ENCODE measurements at regions of chr13 and their contacts with region 1.

Region 1: GRCh38 chr13:30673669-30674521 is 56.2 kb downstream of the USPL1 start:
- DNase-seq: peak; percentile 94
- ATAC-seq: peak; percentile 93
- H3K4me3 Mint-ChIP-seq: peak overlapping the region; percentile 92
- H3K27ac Mint-ChIP-seq: peak overlapping the region; percentile 92
- H3K4me1 Mint-ChIP-seq: peaks cover 29% of the 10 kb centered on the region
- H3K27me3 Mint-ChIP-seq: no peaks in the 10 kb centered on the region
- CTCF ChIP-seq: no peak

Region 2: GRCh38 chr13:30306762-30307193 is 367.1 kb before region 1 on chr13:
- CTCF ChIA-PET with region 1: no interaction called
- POLR2A ChIA-PET with region 1: no interaction called
- intact Hi-C with region 1: loop called (anchors 2 kb)
- DNase-seq: peak; percentile 86
- ATAC-seq: peak; percentile 86
- H3K4me3 Mint-ChIP-seq: peak overlapping the region; percentile 90
- H3K27ac Mint-ChIP-seq: peak overlapping the region; percentile 85
- H3K4me1 Mint-ChIP-seq: peaks cover 72% of the 10 kb centered on the region
- H3K27me3 Mint-ChIP-seq: no peaks in the 10 kb centered on the region
- CTCF ChIP-seq: no peak

Region 3: GRCh38 chr13:30572859-30573275 is 101.0 kb before region 1 on chr13:
- CTCF ChIA-PET with region 1: no interaction called
- POLR2A ChIA-PET with region 1: no interaction called
- intact Hi-C with region 1: loop called (anchors 2 kb)
- DNase-seq: no peak
- ATAC-seq: peak; percentile 83
- H3K4me3 Mint-ChIP-seq: peak overlapping the region; percentile 64
- H3K27ac Mint-ChIP-seq: peak overlapping the region; percentile 71
- H3K4me1 Mint-ChIP-seq: peaks cover 23% of the 10 kb centered on the region
- H3K27me3 Mint-ChIP-seq: no peaks in the 10 kb centered on the region
- CTCF ChIP-seq: no peak

Region 4: GRCh38 chr13:30659980-30660379 is 13.9 kb before region 1 on chr13:
- CTCF ChIA-PET with region 1: no interaction called
- POLR2A ChIA-PET with region 1: interaction called, 8 read pairs
- intact Hi-C with region 1: loop called (anchors 1 kb)
- DNase-seq: no peak
- ATAC-seq: no peak
- H3K4me3 Mint-ChIP-seq: peak overlapping the region; percentile 53
- H3K27ac Mint-ChIP-seq: peak overlapping the region; percentile 84
- H3K4me1 Mint-ChIP-seq: peaks cover 5% of the 10 kb centered on the region
- H3K27me3 Mint-ChIP-seq: no peaks in the 10 kb centered on the region
- CTCF ChIP-seq: no peak

Region 5: GRCh38 chr13:30690282-30691188 is 16.6 kb after region 1 on chr13:
- CTCF ChIA-PET with region 1: no interaction called
- POLR2A ChIA-PET with region 1: no interaction called
- intact Hi-C with region 1: loop called (anchors 2 kb)
- DNase-seq: peak; percentile 27
- ATAC-seq: peak; percentile 83
- H3K4me3 Mint-ChIP-seq: peak overlapping the region; percentile 76
- H3K27ac Mint-ChIP-seq: peak overlapping the region; percentile 71
- H3K4me1 Mint-ChIP-seq: peaks cover 18% of the 10 kb centered on the region
- H3K27me3 Mint-ChIP-seq: peaks cover 3% of the 10 kb centered on the region
- CTCF ChIP-seq: no peak

Region 6: DNA sequence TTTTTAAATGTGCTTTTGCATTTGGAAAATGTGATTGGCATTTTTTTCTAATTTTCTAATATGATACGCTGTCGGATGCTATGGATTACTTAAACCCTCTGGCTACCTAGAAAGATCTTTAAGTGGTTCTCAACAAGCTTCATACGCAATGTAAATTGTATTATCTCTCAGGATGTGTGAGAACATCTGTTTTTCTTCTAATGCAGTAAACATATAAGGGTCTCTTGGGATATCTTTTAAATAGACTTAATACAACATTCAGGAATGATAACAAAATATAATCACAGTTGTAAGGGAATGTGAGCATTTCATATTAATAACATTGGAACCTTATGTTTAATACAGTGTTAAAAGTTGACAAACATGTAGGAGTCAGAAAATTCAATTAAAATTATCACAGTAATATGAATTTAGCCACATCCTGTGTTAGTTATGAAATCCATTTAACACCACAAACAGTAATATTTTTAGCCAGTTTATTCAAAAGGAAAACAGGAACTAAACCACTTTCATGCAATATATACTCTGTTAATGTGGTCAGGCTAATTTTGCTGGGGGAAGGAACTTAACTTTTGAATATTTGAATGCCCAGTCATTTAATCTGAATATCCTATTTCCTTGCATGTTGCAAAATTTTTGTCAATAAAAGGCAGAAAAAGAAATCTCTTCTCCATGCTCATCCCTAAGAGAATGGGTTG is 46.4 kb after region 1 on chr13:
- CTCF ChIA-PET with region 1: no interaction called
- POLR2A ChIA-PET with region 1: interaction called, 3 read pairs
- intact Hi-C with region 1: loop called (anchors 1 kb)
- DNase-seq: no peak
- ATAC-seq: peak; percentile 71
- H3K4me3 Mint-ChIP-seq: peak overlapping the region; percentile 64
- H3K27ac Mint-ChIP-seq: peak overlapping the region; percentile 19
- H3K4me1 Mint-ChIP-seq: peaks cover 49% of the 10 kb centered on the region
- H3K27me3 Mint-ChIP-seq: no peaks in the 10 kb centered on the region
- CTCF ChIP-seq: no peak

Region 7: GRCh38 chr13:30865123-30866049 is 191.5 kb after region 1 on chr13:
- CTCF ChIA-PET with region 1: no interaction called
- POLR2A ChIA-PET with region 1: no interaction called
- intact Hi-C with region 1: loop called (anchors 1 kb)
- DNase-seq: peak; percentile 29
- ATAC-seq: peak; percentile 96
- H3K4me3 Mint-ChIP-seq: no peak overlapping the region
- H3K27ac Mint-ChIP-seq: no peak overlapping the region
- H3K4me1 Mint-ChIP-seq: peaks cover 1% of the 10 kb centered on the region
- H3K27me3 Mint-ChIP-seq: peaks cover 13% of the 10 kb centered on the region
- CTCF ChIP-seq: peak; percentile 66

Measured in activated B cell treated with CpG ODN at 0.5 μM for 24 hours (primary cell).